Naive thymus-derived CD4-positive, alpha-beta T cell (primary cell): ENCODE measurements at regions of chr1 and their contacts with region 1.

Region 1: DNA sequence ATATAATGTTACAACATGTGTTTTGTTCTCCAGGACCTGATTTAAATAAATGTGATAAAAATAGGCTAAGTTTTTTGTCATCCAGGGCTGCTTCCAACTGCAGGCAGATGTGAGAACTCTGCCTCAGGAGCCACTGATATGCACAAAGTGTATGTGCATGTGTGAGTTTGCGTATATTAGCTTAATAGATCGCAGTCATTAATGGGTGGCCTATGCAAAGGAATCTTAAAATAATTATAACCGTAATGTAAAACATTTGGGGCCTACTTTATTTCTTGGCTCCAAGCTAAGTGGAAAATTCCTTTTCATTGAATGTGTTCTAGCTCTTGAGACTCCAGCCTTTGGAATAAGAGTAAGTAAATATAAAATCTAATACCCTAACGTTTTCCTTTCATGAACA is 16.8 kb downstream of the DHX9 start:
- DNase-seq: no peak
- ATAC-seq: no peak
- H3K4me3 ChIP-seq: no peak overlapping the region
- H3K4me3 Mint-ChIP-seq: no peak overlapping the region
- H3K27ac ChIP-seq: no peak overlapping the region
- H3K27ac Mint-ChIP-seq: no peak overlapping the region
- H3K4me1 ChIP-seq: no peaks in the 10 kb centered on the region
- H3K4me1 Mint-ChIP-seq: peaks cover 0 to 21% (median 13%) of the 10 kb centered on the region in 7 donors
- H3K27me3 ChIP-seq: no peaks in the 10 kb centered on the region
- H3K27me3 Mint-ChIP-seq: no peaks in the 10 kb centered on the region

Region 2: DNA sequence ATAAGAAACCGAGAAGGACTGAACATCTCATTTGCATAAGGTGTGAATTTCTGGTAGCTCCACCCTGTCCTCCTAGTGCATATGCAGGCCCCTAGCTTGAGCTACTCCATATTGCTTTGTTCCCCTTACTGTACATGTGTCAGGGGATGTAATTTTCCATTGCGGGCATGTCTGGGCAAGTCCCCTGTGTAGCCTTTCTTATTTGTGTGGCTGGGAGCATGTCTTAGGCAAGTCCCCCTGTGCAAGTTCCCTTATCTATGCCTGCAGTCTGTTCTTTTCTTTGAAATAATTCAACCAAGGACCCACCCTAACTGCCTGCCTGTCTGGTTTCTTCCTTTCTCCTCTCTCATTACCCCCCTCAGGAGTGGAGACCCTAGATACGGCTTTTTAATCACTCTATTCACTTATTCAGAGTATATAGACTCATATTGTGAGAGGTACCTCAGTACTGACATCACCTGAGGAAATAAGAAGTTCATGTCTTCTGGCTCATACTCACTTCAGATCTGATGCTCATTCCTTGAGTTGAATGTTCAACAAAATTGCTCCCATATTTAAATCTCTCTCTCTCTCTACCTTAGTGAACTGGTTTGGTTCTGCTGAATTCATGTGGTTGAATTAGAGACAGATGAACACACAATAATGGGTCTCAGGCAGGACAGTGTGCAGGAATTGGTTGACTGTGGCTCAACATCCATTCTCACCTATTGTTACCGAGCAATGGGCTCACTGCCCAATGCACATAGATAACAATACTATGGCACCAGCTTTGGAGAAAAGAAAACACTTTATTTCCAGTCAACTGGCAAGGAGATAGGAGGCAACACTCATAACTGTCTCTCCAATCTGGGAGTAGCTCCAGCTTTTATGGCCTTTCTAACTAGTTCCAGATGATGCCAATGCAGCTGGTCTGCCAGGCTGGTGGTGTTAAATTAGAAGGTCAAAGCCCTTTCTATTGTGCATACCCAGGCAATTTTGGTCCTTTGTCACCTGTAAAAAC is 94.2 kb before region 1 on chr1:
- CTCF ChIA-PET with region 1: no interaction called
- POLR2A ChIA-PET with region 1: no interaction called
- intact Hi-C with region 1: no loop called
- DNase-seq: no peak
- ATAC-seq: no peak
- H3K4me3 ChIP-seq: no peak overlapping the region
- H3K4me3 Mint-ChIP-seq: no peak overlapping the region
- H3K27ac ChIP-seq: no peak overlapping the region
- H3K27ac Mint-ChIP-seq: no peak overlapping the region
- H3K4me1 ChIP-seq: no peaks in the 10 kb centered on the region
- H3K4me1 Mint-ChIP-seq: peaks cover 0 to 5% (median 0%) of the 10 kb centered on the region in 7 donors
- H3K27me3 ChIP-seq: no peaks in the 10 kb centered on the region
- H3K27me3 Mint-ChIP-seq: peaks cover 6 to 19% (median 9%) of the 10 kb centered on the region in 5 donors

Region 3: DNA sequence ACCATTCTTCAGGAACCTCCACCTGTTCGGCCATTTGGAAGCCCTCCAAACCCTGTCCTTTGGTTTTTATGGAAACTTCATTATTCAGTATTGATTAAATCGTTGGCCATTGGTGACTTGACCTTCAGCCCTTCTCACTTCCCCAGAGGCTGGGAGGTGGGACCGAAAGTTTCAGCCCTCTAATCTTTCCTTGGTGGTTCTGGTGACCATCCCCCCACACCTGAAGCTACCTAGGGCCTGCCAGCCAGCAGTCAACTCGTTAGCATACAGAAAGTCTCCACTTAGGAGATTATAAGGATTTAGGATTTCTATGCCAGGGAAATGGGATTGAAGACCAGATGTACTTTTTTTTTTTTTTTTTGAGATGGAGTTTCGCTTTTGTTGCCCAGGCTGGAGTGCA is 10.0 kb before region 1 on chr1:
- CTCF ChIA-PET with region 1: no interaction called
- POLR2A ChIA-PET with region 1: interaction called, 3 read pairs
- intact Hi-C with region 1: loop called in 1 of 2 experiments (anchors 1 kb)
- DNase-seq: no peak
- ATAC-seq: no peak
- H3K4me3 ChIP-seq: no peak overlapping the region
- H3K4me3 Mint-ChIP-seq: peak overlapping the region in 2 of 10 donors; percentile 29 to 39
- H3K27ac ChIP-seq: no peak overlapping the region
- H3K27ac Mint-ChIP-seq: peak overlapping the region in 3 of 9 donors; percentile 52 to 65 (median 58)
- H3K4me1 ChIP-seq: peaks cover 37 to 44% of the 10 kb centered on the region in 2 donors
- H3K4me1 Mint-ChIP-seq: peaks cover 50 to 98% (median 92%) of the 10 kb centered on the region in 7 donors
- H3K27me3 ChIP-seq: no peaks in the 10 kb centered on the region
- H3K27me3 Mint-ChIP-seq: no peaks in the 10 kb centered on the region

Region 4: DNA sequence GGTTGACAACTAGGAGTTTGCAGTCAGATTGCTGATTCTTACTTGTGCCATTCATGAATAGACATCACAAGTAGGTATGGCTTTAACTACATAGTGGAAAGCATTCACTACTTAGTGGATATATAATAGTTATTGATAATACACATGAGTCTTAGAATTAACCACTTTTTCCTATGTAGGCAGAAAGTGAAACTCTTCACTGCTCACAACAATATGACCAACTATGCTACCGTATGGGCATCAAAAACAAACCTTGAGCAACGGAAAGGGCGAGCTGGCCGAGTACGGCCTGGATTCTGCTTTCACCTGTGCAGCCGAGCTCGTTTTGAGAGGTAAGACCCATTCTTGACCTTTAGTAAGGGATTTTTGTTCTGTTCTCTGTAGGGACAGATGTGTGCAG is 21.9 kb after region 1 on chr1:
- CTCF ChIA-PET with region 1: no interaction called
- POLR2A ChIA-PET with region 1: interaction called, 3 read pairs
- intact Hi-C with region 1: loop called in 1 of 2 experiments (anchors 2 kb)
- DNase-seq: peak in 1 of 9 donors; percentile 30
- ATAC-seq: no peak
- H3K4me3 ChIP-seq: no peak overlapping the region
- H3K4me3 Mint-ChIP-seq: no peak overlapping the region
- H3K27ac ChIP-seq: no peak overlapping the region
- H3K27ac Mint-ChIP-seq: peak overlapping the region in 3 of 9 donors; percentile 21 to 54 (median 50)
- H3K4me1 ChIP-seq: no peaks in the 10 kb centered on the region
- H3K4me1 Mint-ChIP-seq: peaks cover 3 to 21% (median 6%) of the 10 kb centered on the region in 7 donors
- H3K27me3 ChIP-seq: no peaks in the 10 kb centered on the region
- H3K27me3 Mint-ChIP-seq: no peaks in the 10 kb centered on the region

Region 5: GRCh38 chr1:182884872-182885271 is 29.0 kb after region 1 on chr1:
- CTCF ChIA-PET with region 1: no interaction called
- POLR2A ChIA-PET with region 1: no interaction called
- intact Hi-C with region 1: loop called in 1 of 2 experiments (anchors 2 kb)
- DNase-seq: no peak
- ATAC-seq: no peak
- H3K4me3 ChIP-seq: no peak overlapping the region
- H3K4me3 Mint-ChIP-seq: no peak overlapping the region
- H3K27ac ChIP-seq: no peak overlapping the region
- H3K27ac Mint-ChIP-seq: peak overlapping the region in 1 of 9 donors; percentile 23
- H3K4me1 ChIP-seq: peaks cover 0 to 9% of the 10 kb centered on the region in 2 donors
- H3K4me1 Mint-ChIP-seq: peaks cover 2 to 29% (median 13%) of the 10 kb centered on the region in 7 donors
- H3K27me3 ChIP-seq: no peaks in the 10 kb centered on the region
- H3K27me3 Mint-ChIP-seq: no peaks in the 10 kb centered on the region

Region 6: DNA sequence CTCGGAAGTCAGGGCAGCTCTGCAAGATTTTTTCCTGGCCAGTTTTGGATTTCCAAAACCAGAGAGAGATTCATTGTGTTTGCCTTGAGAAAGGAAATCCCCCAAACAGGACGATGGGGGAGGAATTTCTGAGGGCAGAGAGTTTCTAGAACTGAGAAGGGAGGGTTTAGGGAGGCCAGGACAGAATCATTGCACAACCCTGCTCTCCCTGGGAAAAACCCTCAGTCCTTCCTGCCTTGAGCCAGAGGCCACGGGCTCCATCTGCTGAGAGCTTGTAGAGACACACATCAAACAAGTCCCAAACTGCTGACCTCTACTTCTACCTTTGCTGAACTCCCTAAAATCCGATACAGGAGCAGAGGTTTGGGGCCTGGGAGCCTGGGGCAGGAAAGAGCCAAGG is 462.5 kb after region 1 on chr1:
- CTCF ChIA-PET with region 1: no interaction called
- POLR2A ChIA-PET with region 1: no interaction called
- intact Hi-C with region 1: no loop called
- DNase-seq: no peak
- ATAC-seq: no peak
- H3K4me3 ChIP-seq: no peak overlapping the region
- H3K4me3 Mint-ChIP-seq: no peak overlapping the region
- H3K27ac ChIP-seq: no peak overlapping the region
- H3K27ac Mint-ChIP-seq: no peak overlapping the region
- H3K4me1 ChIP-seq: no peaks in the 10 kb centered on the region
- H3K4me1 Mint-ChIP-seq: peaks cover 0 to 3% (median 0%) of the 10 kb centered on the region in 7 donors
- H3K27me3 ChIP-seq: no peaks in the 10 kb centered on the region
- H3K27me3 Mint-ChIP-seq: peaks cover 8 to 29% (median 18%) of the 10 kb centered on the region in 5 donors